CD4-positive, alpha-beta memory T cell (primary cell): ENCODE measurements at regions of chr2 and their contacts with region 1.

Region 1: DNA sequence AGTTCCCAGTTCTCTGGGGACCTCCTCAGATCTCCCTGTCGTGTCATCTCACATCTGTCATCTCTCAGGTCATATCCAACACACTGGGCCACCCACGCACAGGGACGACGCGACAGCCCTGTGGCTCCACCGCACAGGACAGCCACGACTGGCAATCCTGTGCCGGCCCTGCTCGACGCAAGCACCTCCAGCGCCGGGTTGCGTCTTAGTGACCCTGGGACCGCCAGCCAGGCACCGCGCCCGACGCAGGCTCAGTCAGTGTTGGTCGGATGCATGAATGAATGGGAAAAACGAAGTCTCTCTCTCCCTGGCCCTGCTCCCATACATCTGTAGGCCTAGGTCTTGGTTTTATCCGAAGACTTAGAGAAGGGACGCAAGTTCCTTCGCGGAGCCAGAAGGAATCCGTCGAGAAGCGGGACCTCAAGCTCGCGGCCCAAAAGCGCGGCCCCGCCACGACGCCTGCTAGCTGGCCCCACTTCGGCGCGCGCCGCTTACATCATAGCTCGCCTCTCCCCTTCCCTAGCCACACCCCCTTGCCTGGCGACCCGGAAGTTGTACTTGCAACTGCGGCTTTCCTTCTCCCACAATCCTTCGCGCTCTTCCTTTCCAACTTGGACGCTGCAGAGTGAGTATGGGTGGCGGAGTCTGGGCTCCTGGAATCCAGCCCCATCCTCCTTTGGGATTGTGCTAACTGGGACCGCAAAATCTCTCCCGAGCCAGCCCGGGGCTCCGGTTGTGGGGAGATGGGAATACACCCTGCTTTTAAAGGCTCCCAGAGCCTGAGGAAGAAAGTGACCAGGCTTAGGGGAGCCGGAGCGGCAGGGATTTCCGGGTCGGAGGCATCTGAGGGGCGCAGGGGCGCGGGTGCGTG is at the start of gene RPL31:
- DNase-seq: peak; percentile 93 to 98 (median 96)
- H3K4me3 ChIP-seq: peak within 1 kb of the TSS; percentile 97 to 98
- H3K4me3 Mint-ChIP-seq: peak within 1 kb of the TSS; percentile 90 to 96 (median 95)
- H3K27ac ChIP-seq: peak within 1 kb of the TSS; percentile 91
- H3K27ac Mint-ChIP-seq: peak within 1 kb of the TSS; percentile 91 to 99 (median 98)
- H3K4me1 ChIP-seq: peaks cover 37% of the 10 kb centered on the region
- H3K4me1 Mint-ChIP-seq: peaks cover 32 to 51% (median 45%) of the 10 kb centered on the region in 4 donors
- H3K27me3 ChIP-seq: no peaks in the 10 kb centered on the region
- H3K27me3 Mint-ChIP-seq: no peaks in the 10 kb centered on the region
- total RNA-seq, gene RPL31: 2,455 to 2,531 TPM

Region 2: DNA sequence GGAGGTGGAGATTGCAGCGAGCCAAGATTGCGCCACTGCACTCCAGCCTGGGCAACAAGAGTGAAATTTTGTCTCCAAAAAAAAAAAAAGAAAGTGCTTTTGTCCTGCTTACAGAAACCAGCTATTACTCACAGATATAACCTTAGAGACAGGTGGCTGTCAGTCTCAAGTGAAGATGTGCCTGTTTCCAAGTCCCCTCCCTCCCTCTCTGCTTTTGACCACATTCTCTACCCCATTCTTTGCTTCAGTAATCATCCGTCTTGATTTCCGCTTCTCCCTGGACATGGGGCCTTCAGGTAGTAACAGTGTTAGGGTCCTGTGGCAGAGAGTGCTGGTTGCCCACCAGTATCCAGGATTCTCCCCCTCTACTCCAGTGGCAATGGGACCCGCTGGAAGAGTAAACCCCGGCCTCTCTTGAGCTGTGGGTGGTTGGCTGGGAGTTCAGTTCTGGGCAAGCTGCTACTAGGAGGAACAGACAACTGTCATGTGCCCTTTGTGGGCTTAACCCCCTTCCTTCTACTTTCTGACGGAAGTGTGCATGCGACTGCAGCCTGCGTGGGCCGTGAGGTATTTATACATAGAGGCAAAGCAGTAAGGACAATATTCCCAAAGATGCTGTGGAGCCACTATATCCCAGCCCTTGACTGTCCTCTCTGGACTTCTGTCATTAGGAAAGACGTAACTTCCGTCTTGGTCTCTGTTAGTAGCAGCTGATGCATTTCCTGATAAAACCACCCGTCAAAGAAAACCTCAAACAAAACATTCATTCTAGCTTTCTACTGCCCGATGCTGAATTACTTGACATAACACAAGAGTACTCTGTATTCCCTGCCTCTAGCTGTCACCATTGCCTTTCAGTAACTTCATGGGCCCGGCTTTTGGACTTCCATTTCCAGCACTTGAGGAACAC is 421.3 kb before region 1 on chr2:
- CTCF ChIA-PET with region 1: no interaction called
- POLR2A ChIA-PET with region 1: interaction called, 24 read pairs
- intact Hi-C with region 1: no loop called
- DNase-seq: peak; percentile 73 to 90 (median 80)
- H3K4me3 ChIP-seq: peak overlapping the region in 1 of 2 donors; percentile 17
- H3K4me3 Mint-ChIP-seq: peak overlapping the region in 7 of 8 donors; percentile 32 to 81 (median 69)
- H3K27ac ChIP-seq: peak overlapping the region; percentile 71
- H3K27ac Mint-ChIP-seq: peak overlapping the region; percentile 93 to 99 (median 98)
- H3K4me1 ChIP-seq: peaks cover 37% of the 10 kb centered on the region
- H3K4me1 Mint-ChIP-seq: peaks cover 24 to 52% (median 42%) of the 10 kb centered on the region in 4 donors
- H3K27me3 ChIP-seq: no peaks in the 10 kb centered on the region
- H3K27me3 Mint-ChIP-seq: no peaks in the 10 kb centered on the region